Breast epithelium (tissue), 4 donors: ENCODE measurements at regions of chr10 and their contacts with region 1.

Region 1: DNA sequence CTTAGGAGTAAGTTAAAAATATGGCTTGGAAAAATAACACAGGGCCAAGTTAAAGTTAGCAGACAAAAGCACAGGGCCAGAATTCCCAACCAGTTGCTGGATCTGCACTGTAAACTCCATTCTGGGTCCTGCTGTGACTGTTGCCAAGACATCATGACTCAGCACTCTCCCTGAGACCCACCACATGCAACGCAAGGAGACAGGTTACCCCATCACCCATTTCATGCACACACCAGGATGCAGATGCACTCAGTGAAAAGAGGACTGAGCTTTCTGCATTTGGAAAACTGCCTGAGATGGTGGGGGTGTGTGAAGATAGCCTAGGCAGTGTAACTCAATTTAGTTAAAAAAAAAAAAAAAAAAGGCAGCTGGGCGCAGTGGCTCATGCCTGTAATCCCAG is 97.6 kb upstream of the ZNF438 start:
- DNase-seq: no peak
- H3K4me3 ChIP-seq: no peak overlapping the region
- H3K27ac ChIP-seq: no peak overlapping the region
- H3K4me1 ChIP-seq: no peaks in the 10 kb centered on the region
- H3K27me3 ChIP-seq: no peaks in the 10 kb centered on the region
- CTCF ChIP-seq: no peak
- POLR2A ChIP-seq: no peak

Region 2: GRCh38 chr10:31599626-31600504 is 470.6 kb after region 1 on chr10:
- intact Hi-C with region 1: loop called (anchors 10 kb)
- DNase-seq: no peak
- H3K4me3 ChIP-seq: no peak overlapping the region
- H3K27ac ChIP-seq: no peak overlapping the region
- H3K4me1 ChIP-seq: no peaks in the 10 kb centered on the region
- H3K27me3 ChIP-seq: no peaks in the 10 kb centered on the region
- CTCF ChIP-seq: no peak
- POLR2A ChIP-seq: no peak